ENCODE measurements at regions of chr2 and their contacts with region 1.

Region 1: GRCh38 chr2:102520028-102520427 is 47.0 kb downstream of the SLC9A4 start:
- DNase-seq: peak; percentile 52
- ATAC-seq: peak; percentile 80
- H3K4me3 Mint-ChIP-seq: no peak overlapping the region
- H3K27ac Mint-ChIP-seq: no peak overlapping the region
- H3K4me1 Mint-ChIP-seq: no peaks in the 10 kb centered on the region
- H3K27me3 Mint-ChIP-seq: peaks cover 2% of the 10 kb centered on the region

Region 2: DNA sequence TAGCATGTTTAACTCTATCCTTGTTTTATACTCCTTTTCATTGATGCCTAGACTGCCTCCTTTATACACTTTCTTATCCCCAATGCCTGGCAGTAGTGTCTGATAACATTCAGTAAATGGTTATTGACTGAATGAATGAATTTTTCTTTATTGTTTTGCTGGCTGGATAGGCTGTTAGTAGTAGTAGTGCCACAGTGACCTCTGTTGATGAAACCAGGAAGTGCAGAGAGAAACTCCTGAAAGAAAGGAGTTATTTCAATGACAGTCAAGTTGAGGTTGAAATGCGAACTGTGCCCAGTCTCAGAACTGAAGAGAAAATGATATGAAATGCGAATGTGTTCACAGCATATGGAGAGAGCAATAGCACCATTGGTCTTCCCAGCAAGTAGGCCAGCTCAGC is 72.6 kb after region 1 on chr2:
- CTCF ChIA-PET with region 1: no interaction called
- POLR2A ChIA-PET with region 1: no interaction called
- intact Hi-C with region 1: loop called in 1 of 2 experiments (anchors 1 kb)
- DNase-seq: peak; percentile 39
- ATAC-seq: no peak
- H3K4me3 Mint-ChIP-seq: no peak overlapping the region
- H3K27ac Mint-ChIP-seq: no peak overlapping the region
- H3K4me1 Mint-ChIP-seq: no peaks in the 10 kb centered on the region
- H3K27me3 Mint-ChIP-seq: peaks cover 4% of the 10 kb centered on the region

Region 3: GRCh38 chr2:102703748-102704147 is 183.7 kb after region 1 on chr2:
- CTCF ChIA-PET with region 1: no interaction called
- POLR2A ChIA-PET with region 1: no interaction called
- intact Hi-C with region 1: loop called (anchors 1 to 10 kb)
- DNase-seq: peak; percentile 40
- ATAC-seq: no peak
- H3K4me3 Mint-ChIP-seq: no peak overlapping the region
- H3K27ac Mint-ChIP-seq: no peak overlapping the region
- H3K4me1 Mint-ChIP-seq: no peaks in the 10 kb centered on the region
- H3K27me3 Mint-ChIP-seq: peaks cover 4% of the 10 kb centered on the region

Measured in activated CD4-positive, alpha-beta T cell treated with anti-CD3 and anti-CD28 coated beads for 36 hours (primary cell).